Left ventricle myocardium superior (tissue), 1 donor: ENCODE measurements at regions of chr18 and their contacts with region 1.

Region 1: DNA sequence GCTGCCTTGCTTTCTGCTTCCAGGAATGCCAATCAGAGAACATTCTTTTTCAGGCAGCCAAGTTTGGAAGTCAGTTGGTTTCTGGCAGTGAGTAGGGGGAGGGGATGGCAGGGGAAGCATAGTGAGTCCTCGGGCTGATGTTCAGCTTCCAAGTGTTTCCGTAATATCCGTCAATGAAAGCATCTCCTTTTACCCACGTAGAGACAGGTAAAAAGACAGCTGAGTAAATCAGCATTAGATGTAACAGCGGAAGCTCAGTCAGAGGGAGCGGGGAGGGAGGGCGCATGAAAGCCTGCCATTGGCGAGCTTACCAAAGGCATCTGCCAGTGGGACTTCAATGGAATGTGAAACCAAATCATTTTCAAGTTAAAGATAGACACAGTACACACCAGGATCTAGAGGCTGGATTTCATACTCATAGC is 117.1 kb upstream of the DTNA start:
- DNase-seq: peak; percentile 69
- ATAC-seq: peak; percentile 93

Region 2: GRCh38 chr18:34495506-34495905 is 97.5 kb before region 1 on chr18:
- intact Hi-C with region 1: loop called (anchors 5 kb)
- DNase-seq: no peak
- ATAC-seq: no peak